A549 (cell line): ENCODE measurements at regions of chr9 and their contacts with region 1.

Region 1: DNA sequence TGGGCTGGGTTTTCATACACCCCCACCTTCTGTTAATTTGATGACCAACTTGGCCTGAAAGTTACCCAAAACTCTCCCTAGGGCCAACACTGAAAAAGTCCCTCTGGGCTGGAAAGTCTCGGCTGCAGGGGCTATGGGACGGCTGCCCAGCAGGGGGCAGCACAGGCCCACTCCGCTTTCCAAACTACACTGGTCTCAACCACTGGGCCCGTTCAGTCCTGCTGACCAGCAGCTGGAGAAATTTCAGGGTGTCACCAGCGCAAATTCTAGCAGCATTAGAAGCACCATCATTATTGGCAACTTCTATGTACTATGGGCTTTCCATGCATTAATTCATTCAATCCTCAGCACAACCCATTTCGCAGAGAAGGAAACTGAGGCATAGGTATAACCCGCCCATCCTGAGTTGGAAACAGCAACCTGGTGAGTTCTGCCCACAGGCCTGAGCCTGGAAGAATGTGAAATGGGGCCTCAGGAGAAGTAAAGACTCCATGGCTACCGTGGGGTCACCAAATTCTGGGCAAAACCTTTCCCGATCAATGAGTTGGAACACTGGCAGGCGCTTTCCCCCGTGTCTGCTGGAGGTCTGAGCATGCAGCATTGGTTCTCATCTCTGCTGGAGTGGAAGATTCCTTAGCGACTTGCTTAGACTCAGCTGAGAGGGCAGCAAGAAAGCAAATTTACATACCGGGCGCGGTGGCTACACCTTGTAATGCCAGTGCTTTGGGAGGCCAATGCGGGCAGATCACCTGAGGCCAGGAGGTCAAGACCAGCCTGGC is 9.7 kb downstream of the ORM2 start:
- DNase-seq: peak; percentile 44 to 84
- ATAC-seq: peak; percentile 73 to 93
- H3K4me3 ChIP-seq: no peak overlapping the region
- H3K27ac ChIP-seq: no peak overlapping the region
- H3K4me1 ChIP-seq: no peaks in the 10 kb centered on the region
- CTCF ChIP-seq: peak; percentile 77
- EP300 ChIP-seq: no peak
- POLR2A ChIP-seq: no peak
- RAD21 ChIP-seq: peak; percentile 80 to 82

Region 2: GRCh38 chr9:114396558-114397218 is 57.4 kb after region 1 on chr9:
- CTCF ChIA-PET with region 1: interaction called, 12 read pairs
- POLR2A ChIA-PET with region 1: no interaction called
- DNase-seq: peak in 1 of 2 experiments; percentile 25
- ATAC-seq: no peak
- H3K4me3 ChIP-seq: peak overlapping the region; percentile 69; the same call in 2 of the 3 replicates
- H3K27ac ChIP-seq: peak overlapping the region; percentile 75 to 88; a peak in 5 of 6 replicates
- H3K4me1 ChIP-seq: peaks cover 15% of the 10 kb centered on the region; the same call in 2 of the 3 replicates
- CTCF ChIP-seq: no peak
- EP300 ChIP-seq: no peak
- POLR2A ChIP-seq: no peak
- RAD21 ChIP-seq: no peak